Activated CD8-positive, alpha-beta T cell treated with anti-CD3 and anti-CD28 coated beads for 36 hours (primary cell): ENCODE measurements at regions of chr17 and their contacts with region 1.

Region 1: GRCh38 chr17:5500589-5501391 is 14.4 kb downstream of the MIS12 start:
- DNase-seq: peak; percentile 85
- ATAC-seq: peak; percentile 98
- H3K4me3 Mint-ChIP-seq: peak overlapping the region; percentile 85
- H3K27ac Mint-ChIP-seq: peak overlapping the region; percentile 60
- H3K4me1 Mint-ChIP-seq: peaks cover 21% of the 10 kb centered on the region
- H3K27me3 Mint-ChIP-seq: no peaks in the 10 kb centered on the region
- CTCF ChIP-seq: no peak

Region 2: DNA sequence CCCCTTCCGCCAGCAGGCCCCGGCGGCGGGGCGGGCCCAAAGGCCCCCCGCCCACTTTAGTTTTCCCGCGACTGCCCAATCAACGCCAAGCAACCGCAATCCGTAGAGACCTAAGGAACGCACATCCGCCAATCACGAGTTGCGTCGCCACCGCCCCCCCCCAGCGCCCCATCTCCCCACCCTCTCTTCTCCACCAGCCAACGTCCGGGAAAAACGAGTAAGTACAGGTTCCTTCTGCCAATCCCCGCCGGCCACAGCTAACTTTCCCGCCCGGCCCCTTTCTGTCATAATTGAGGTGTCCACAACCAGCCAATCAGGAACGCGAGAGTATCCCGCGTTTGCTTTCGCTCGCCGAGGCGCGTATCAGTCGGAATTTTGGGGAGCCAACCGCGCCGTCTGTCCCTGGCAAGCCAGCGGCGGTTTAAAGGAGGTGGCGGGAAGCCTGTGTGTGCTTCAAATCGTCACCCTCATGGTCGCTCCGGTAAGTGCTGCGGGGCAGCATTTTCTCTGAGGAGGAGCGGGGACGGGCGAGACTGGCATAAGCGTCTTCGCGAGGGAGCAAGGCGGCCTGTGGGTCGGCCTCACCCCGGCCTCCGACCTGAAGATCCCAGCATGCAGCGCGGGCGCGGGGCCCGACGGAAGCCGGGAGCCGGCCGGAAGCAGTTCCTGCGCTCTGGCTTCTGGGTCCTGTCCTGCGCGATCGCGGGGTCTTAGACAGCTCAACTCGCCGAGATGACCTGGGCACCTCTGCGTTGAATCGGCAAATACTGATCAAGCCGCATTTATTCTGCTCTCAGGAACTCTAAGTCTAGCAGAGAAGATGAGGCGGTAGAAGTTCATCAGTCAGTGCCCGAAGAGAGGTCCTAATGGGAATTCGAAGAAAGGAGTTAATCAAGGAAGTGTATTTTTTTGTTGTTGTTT is 14.3 kb before region 1 on chr17 and contains the start of gene MIS12:
- CTCF ChIA-PET with region 1: interaction called, 3 read pairs
- POLR2A ChIA-PET with region 1: interaction called, 28 read pairs
- intact Hi-C with region 1: no loop called
- DNase-seq: peak; percentile 100
- ATAC-seq: peak; percentile 92
- H3K4me3 Mint-ChIP-seq: peak within 1 kb of the TSS; percentile 93
- H3K27ac Mint-ChIP-seq: peak within 1 kb of the TSS; percentile 99
- H3K4me1 Mint-ChIP-seq: peaks cover 56% of the 10 kb centered on the region
- H3K27me3 Mint-ChIP-seq: no peaks in the 10 kb centered on the region
- CTCF ChIP-seq: no peak
- total RNA-seq, gene MIS12: 30.3 to 35.0 TPM